Naive thymus-derived CD4-positive, alpha-beta T cell (primary cell): ENCODE measurements at regions of chr1 and their contacts with region 1.

Region 1: DNA sequence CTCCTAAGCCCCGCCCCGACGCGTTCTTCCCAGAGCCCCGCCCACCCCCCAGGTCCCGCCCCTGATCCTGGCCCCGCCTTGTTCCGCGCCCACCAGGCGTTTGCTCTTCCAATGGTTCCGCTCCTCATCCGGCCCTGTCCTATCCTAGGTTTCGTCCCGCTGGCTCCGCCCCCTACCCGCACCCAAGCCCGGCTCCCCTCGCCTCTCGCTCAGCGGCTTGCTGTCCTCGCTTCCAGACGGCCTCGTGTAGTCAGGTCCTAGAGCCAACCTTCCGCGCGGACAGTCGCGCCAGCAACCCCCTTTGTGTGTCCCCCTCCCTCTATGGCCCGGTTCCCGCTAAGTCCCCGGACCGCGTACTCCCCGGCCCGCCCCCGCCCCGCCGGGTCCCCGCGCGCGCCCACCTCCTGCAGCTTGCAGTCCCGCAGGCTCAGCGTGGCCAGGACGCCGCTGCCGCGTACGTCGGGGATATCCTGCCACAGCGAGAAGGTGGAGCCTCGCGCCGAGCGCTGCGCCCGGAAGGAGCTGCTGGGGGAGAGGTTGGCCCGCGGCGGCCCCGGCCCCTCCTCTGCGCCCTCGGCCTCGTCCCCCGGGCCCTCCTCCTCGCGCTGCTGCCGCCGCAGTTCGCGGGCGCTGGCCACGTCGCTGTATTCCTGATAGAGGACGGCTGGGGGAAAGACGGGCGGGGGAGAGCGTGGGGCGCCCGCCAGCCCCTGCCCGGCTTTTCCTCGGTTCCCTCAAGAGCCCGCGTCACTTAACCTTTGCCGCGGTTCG is 5.7 kb downstream of the ARHGEF19 start:
- DNase-seq: peak; percentile 85 to 95 (median 93)
- ATAC-seq: peak; percentile 94
- H3K4me3 ChIP-seq: peak overlapping the region; percentile 74
- H3K4me3 Mint-ChIP-seq: peak overlapping the region; percentile 83 to 95 (median 90)
- H3K27ac ChIP-seq: peak overlapping the region; percentile 81
- H3K27ac Mint-ChIP-seq: peak overlapping the region; percentile 87 to 98 (median 95)
- H3K4me1 ChIP-seq: peaks cover 9 to 15% of the 10 kb centered on the region in 2 donors
- H3K4me1 Mint-ChIP-seq: peaks cover 7 to 17% (median 13%) of the 10 kb centered on the region in 7 donors
- H3K27me3 ChIP-seq: no peaks in the 10 kb centered on the region
- H3K27me3 Mint-ChIP-seq: no peaks in the 10 kb centered on the region

Region 2: DNA sequence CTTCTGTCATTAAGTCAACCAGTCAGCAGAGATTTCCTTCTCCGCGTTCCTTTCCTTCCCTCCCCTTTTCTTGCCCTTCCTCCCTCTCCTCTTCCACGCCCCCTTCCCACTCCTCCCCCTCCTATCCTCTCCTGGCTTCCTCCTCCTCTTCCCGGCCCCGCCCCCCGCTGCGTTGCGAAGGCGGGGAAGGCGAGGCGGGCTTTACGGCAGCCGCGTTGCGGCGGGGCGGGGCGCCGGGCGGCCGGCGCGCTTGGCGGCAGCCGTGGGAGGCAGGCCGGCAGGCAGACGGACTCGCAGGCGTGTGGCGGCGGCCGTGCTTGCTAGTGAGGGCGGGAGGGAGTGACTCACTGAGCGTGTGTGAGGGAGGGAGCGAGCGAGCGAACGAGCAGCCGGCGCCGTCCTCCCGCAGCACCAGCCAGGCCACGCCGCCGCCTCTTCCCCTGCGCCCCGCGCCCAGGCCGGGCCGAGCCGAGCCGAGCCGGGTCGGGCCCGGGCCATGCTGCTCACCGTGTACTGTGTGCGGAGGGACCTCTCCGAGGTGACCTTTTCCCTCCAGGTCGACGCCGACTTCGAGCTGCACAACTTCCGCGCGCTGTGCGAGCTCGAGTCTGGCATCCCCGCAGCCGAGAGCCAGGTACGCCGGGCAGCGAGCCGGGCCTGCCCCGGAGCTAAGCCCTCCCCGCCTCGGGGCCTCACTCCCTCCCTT is 589.4 kb before region 1 on chr1 and contains the start of gene DDI2:
- CTCF ChIA-PET with region 1: no interaction called
- POLR2A ChIA-PET with region 1: no interaction called
- intact Hi-C with region 1: loop called (anchors 2 to 5 kb)
- DNase-seq: peak; percentile 86 to 97 (median 88)
- ATAC-seq: peak; percentile 94
- H3K4me3 ChIP-seq: peak within 1 kb of the TSS; percentile 96
- H3K4me3 Mint-ChIP-seq: peak within 1 kb of the TSS; percentile 83 to 96 (median 94)
- H3K27ac ChIP-seq: peak within 1 kb of the TSS; percentile 88
- H3K27ac Mint-ChIP-seq: peak within 1 kb of the TSS; percentile 84 to 96 (median 92)
- H3K4me1 ChIP-seq: peaks cover 20 to 30% of the 10 kb centered on the region in 2 donors
- H3K4me1 Mint-ChIP-seq: peaks cover 29 to 51% (median 43%) of the 10 kb centered on the region in 7 donors
- H3K27me3 ChIP-seq: no peaks in the 10 kb centered on the region
- H3K27me3 Mint-ChIP-seq: no peaks in the 10 kb centered on the region
- total RNA-seq, gene DDI2: 24.5 to 46.8 (median 37.0) TPM

Region 3: GRCh38 chr1:16162163-16162822 is 44.4 kb before region 1 on chr1:
- CTCF ChIA-PET with region 1: no interaction called
- POLR2A ChIA-PET with region 1: no interaction called
- intact Hi-C with region 1: loop called in 1 of 2 experiments (anchors 1 kb)
- DNase-seq: peak; percentile 40 to 75 (median 71)
- ATAC-seq: peak; percentile 78
- H3K4me3 ChIP-seq: peak overlapping the region; percentile 55
- H3K4me3 Mint-ChIP-seq: peak overlapping the region; percentile 65 to 91 (median 82)
- H3K27ac ChIP-seq: peak overlapping the region; percentile 67
- H3K27ac Mint-ChIP-seq: peak overlapping the region; percentile 20 to 96 (median 87)
- H3K4me1 ChIP-seq: peaks cover 31 to 51% of the 10 kb centered on the region in 2 donors
- H3K4me1 Mint-ChIP-seq: peaks cover 52 to 96% (median 76%) of the 10 kb centered on the region in 7 donors
- H3K27me3 ChIP-seq: no peaks in the 10 kb centered on the region
- H3K27me3 Mint-ChIP-seq: peaks cover 0 to 59% (median 0%) of the 10 kb centered on the region in 5 donors

Region 4: GRCh38 chr1:16236511-16237342 is 30.0 kb after region 1 on chr1 and contains the start of gene CPLANE2:
- CTCF ChIA-PET with region 1: interaction called, 4 read pairs
- POLR2A ChIA-PET with region 1: interaction called, 7 read pairs
- intact Hi-C with region 1: loop called (anchors 1 kb)
- DNase-seq: peak; percentile 91 to 99 (median 94)
- ATAC-seq: peak; percentile 89
- H3K4me3 ChIP-seq: peak within 1 kb of the TSS; percentile 94
- H3K4me3 Mint-ChIP-seq: peak within 1 kb of the TSS; percentile 85 to 95 (median 92)
- H3K27ac ChIP-seq: peak within 1 kb of the TSS; percentile 78
- H3K27ac Mint-ChIP-seq: peak within 1 kb of the TSS; percentile 91 to 97 (median 95)
- H3K4me1 ChIP-seq: peaks cover 15 to 19% of the 10 kb centered on the region in 2 donors
- H3K4me1 Mint-ChIP-seq: peaks cover 0 to 28% (median 23%) of the 10 kb centered on the region in 7 donors
- H3K27me3 ChIP-seq: no peaks in the 10 kb centered on the region
- H3K27me3 Mint-ChIP-seq: no peaks in the 10 kb centered on the region
- total RNA-seq, gene CPLANE2: 6.6 to 11.4 (median 8.8) TPM

Region 5: DNA sequence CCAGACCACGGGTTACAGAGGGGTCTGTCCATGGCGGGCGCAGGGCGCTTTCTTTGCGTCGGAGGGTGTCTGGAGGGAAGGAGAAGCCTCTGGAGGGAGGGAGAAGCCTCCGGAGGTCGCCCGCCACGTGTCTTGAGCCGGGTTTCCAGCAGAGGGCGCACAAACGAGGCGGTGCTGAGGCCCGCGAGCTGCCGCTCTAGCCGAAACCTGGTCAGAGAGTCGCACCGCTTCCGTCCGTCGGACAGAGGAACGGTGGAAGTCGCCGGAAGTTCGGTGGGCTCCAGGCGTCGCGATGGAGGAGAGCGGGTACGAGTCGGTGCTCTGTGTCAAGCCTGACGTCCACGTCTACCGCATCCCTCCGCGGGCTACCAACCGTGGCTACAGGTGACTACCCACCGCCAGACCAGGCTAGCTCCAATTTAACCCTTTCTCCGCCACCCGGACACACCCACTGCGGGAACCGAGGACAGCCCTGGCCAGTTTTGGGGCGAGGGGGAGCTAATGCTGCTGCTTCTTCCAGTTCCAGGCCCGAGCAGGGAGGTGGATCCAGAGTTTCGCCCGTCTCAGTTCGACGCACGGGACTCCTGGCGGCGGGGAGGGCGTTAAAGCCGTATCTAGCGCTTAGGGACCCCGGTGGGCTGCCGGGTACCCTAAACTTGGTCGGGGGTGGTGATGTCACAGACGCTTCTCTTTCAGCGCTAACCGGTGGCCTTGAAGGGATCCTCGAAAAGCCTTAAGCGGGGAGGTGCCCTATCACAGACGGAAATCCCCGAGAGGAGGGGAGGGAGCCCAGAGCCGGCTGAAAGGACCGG is 233.9 kb after region 1 on chr1 and contains the start of gene NECAP2:
- CTCF ChIA-PET with region 1: no interaction called
- POLR2A ChIA-PET with region 1: no interaction called
- intact Hi-C with region 1: loop called (anchors 2 to 5 kb)
- DNase-seq: peak; percentile 79 to 95 (median 88)
- ATAC-seq: peak; percentile 95
- H3K4me3 ChIP-seq: peak within 1 kb of the TSS; percentile 94
- H3K4me3 Mint-ChIP-seq: peak within 1 kb of the TSS; percentile 93 to 100 (median 97)
- H3K27ac ChIP-seq: peak within 1 kb of the TSS; percentile 100
- H3K27ac Mint-ChIP-seq: peak within 1 kb of the TSS; percentile 88 to 98 (median 96)
- H3K4me1 ChIP-seq: peaks cover 17 to 33% of the 10 kb centered on the region in 2 donors
- H3K4me1 Mint-ChIP-seq: peaks cover 19 to 45% (median 34%) of the 10 kb centered on the region in 7 donors
- H3K27me3 ChIP-seq: no peaks in the 10 kb centered on the region
- H3K27me3 Mint-ChIP-seq: no peaks in the 10 kb centered on the region
- total RNA-seq, gene NECAP2: 98.2 to 161 (median 148) TPM

Region 6: GRCh38 chr1:16913833-16914662 is 707.3 kb after region 1 on chr1:
- CTCF ChIA-PET with region 1: no interaction called
- POLR2A ChIA-PET with region 1: no interaction called
- intact Hi-C with region 1: loop called in 1 of 2 experiments (anchors 10 kb)
- DNase-seq: peak; percentile 82 to 100 (median 90)
- ATAC-seq: peak; percentile 98
- H3K4me3 ChIP-seq: peak overlapping the region; percentile 94
- H3K4me3 Mint-ChIP-seq: peak overlapping the region; percentile 82 to 92 (median 88)
- H3K27ac ChIP-seq: peak overlapping the region; percentile 82
- H3K27ac Mint-ChIP-seq: peak overlapping the region; percentile 72 to 91 (median 87)
- H3K4me1 ChIP-seq: peaks cover 10 to 11% of the 10 kb centered on the region in 2 donors
- H3K4me1 Mint-ChIP-seq: peaks cover 33 to 49% (median 44%) of the 10 kb centered on the region in 7 donors
- H3K27me3 ChIP-seq: no peaks in the 10 kb centered on the region
- H3K27me3 Mint-ChIP-seq: peaks cover 0 to 10% (median 0%) of the 10 kb centered on the region in 5 donors